ENCODE measurements at regions of chr20 and their contacts with region 1.

Region 1: GRCh38 chr20:20073801-20074371 is 21.6 kb downstream of the CFAP61 start:
- DNase-seq: no peak
- ATAC-seq: no peak
- H3K4me3 ChIP-seq: no peak overlapping the region
- H3K4me3 Mint-ChIP-seq: no peak overlapping the region
- H3K27ac ChIP-seq: no peak overlapping the region
- H3K27ac Mint-ChIP-seq: no peak overlapping the region
- H3K4me1 ChIP-seq: no peaks in the 10 kb centered on the region
- H3K4me1 Mint-ChIP-seq: no peaks in the 10 kb centered on the region
- H3K27me3 ChIP-seq: no peaks in the 10 kb centered on the region
- H3K27me3 Mint-ChIP-seq: peaks cover 23% of the 10 kb centered on the region
- CTCF ChIP-seq: no peak

Region 2: DNA sequence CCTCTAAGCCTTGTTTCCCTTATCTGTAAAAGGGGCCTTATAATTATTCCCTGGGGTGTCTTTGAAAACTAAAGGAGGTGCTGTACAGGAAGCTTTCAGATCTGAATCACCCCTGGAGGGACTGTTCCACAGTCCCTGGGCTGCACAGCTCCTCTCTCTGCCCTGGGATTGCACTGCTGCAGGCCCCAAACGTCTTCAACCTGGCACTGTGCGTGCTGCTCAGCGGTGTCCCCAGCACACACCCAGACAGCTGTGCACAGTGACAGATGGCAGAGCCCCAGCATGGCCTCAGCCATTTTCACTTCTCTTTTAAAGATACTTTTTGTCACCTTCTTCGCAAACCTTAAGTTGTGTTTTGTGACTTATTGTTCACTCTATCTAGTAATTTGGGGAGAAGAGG is 243.3 kb after region 1 on chr20:
- CTCF ChIA-PET with region 1: no interaction called
- POLR2A ChIA-PET with region 1: no interaction called
- intact Hi-C with region 1: no loop called
- DNase-seq: peak; percentile 17
- ATAC-seq: peak; percentile 57
- H3K4me3 ChIP-seq: no peak overlapping the region
- H3K4me3 Mint-ChIP-seq: peak overlapping the region; percentile 13
- H3K27ac ChIP-seq: no peak overlapping the region
- H3K27ac Mint-ChIP-seq: no peak overlapping the region
- H3K4me1 ChIP-seq: peaks cover 0 to 13% of the 10 kb centered on the region in 2 donors
- H3K4me1 Mint-ChIP-seq: peaks cover 11% of the 10 kb centered on the region
- H3K27me3 ChIP-seq: no peaks in the 10 kb centered on the region
- H3K27me3 Mint-ChIP-seq: peaks cover 4% of the 10 kb centered on the region
- CTCF ChIP-seq: no peak

Region 3: GRCh38 chr20:21272279-21272678 is 1198.4 kb after region 1 on chr20:
- CTCF ChIA-PET with region 1: no interaction called
- POLR2A ChIA-PET with region 1: no interaction called
- intact Hi-C with region 1: loop called (anchors 5 kb)
- DNase-seq: no peak
- ATAC-seq: no peak
- H3K4me3 ChIP-seq: no peak overlapping the region
- H3K4me3 Mint-ChIP-seq: no peak overlapping the region
- H3K27ac ChIP-seq: no peak overlapping the region
- H3K27ac Mint-ChIP-seq: no peak overlapping the region
- H3K4me1 ChIP-seq: no peaks in the 10 kb centered on the region
- H3K4me1 Mint-ChIP-seq: no peaks in the 10 kb centered on the region
- H3K27me3 ChIP-seq: peaks cover 0 to 19% (median 2%) of the 10 kb centered on the region in 4 experiments
- H3K27me3 Mint-ChIP-seq: peaks cover 26% of the 10 kb centered on the region
- CTCF ChIP-seq: no peak